ENCODE measurements at regions of chr9 and their contacts with region 1.

Region 1: GRCh38 chr9:23563517-23563916 is 262.5 kb downstream of the ELAVL2 start:
- DNase-seq: no peak
- H3K4me3 ChIP-seq: no peak overlapping the region
- H3K27ac ChIP-seq: no peak overlapping the region
- H3K4me1 ChIP-seq: peaks cover 5% of the 10 kb centered on the region
- H3K27me3 ChIP-seq: no peaks in the 10 kb centered on the region
- CTCF ChIP-seq: no peak

Region 2: GRCh38 chr9:23342291-23342690 is 221.2 kb before region 1 on chr9:
- intact Hi-C with region 1: no loop called
- DNase-seq: no peak
- H3K4me3 ChIP-seq: no peak overlapping the region
- H3K27ac ChIP-seq: no peak overlapping the region
- H3K4me1 ChIP-seq: no peaks in the 10 kb centered on the region
- H3K27me3 ChIP-seq: no peaks in the 10 kb centered on the region
- CTCF ChIP-seq: no peak

Region 3: DNA sequence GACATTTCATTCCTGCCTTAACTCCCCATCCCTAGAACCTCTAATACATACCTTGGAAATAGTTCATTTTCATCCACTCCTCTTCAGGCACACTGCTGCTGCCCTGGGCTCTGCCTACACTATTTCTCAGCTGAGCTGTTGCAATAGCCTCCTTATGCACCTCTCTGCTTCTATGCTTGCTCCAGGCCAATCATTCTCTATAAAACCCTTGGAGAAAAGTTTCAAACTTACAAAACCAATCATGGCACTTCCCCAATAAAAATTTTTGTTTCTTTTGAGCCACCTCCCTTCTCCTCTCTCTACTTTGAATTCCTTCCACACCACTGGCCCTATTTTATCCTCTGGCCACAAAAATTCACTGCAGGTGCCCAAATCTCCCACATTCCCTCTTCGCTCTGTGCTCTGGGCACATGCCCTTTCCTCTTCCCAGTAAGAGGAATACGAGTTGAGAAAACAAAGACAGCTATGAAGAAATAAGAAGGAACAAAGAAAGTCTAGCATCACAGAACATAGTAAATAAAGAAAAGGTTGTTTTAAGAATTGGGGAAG is 38.8 kb before region 1 on chr9:
- intact Hi-C with region 1: loop called (anchors 10 kb)
- DNase-seq: no peak
- H3K4me3 ChIP-seq: no peak overlapping the region
- H3K27ac ChIP-seq: no peak overlapping the region
- H3K4me1 ChIP-seq: no peaks in the 10 kb centered on the region
- H3K27me3 ChIP-seq: peaks cover 5% of the 10 kb centered on the region
- CTCF ChIP-seq: no peak